ENCODE measurements at regions of chr1 and their contacts with region 1.

Region 1: GRCh38 chr1:20100632-20101355 is 18.5 kb downstream of the PLA2G2D start:
- DNase-seq: peak; percentile 45 to 58
- H3K4me3 ChIP-seq: no peak overlapping the region
- H3K27ac ChIP-seq: no peak overlapping the region
- H3K4me1 ChIP-seq: peaks cover 31% of the 10 kb centered on the region
- H3K27me3 ChIP-seq: no peaks in the 10 kb centered on the region
- CTCF ChIP-seq: peak; percentile 82

Region 2: DNA sequence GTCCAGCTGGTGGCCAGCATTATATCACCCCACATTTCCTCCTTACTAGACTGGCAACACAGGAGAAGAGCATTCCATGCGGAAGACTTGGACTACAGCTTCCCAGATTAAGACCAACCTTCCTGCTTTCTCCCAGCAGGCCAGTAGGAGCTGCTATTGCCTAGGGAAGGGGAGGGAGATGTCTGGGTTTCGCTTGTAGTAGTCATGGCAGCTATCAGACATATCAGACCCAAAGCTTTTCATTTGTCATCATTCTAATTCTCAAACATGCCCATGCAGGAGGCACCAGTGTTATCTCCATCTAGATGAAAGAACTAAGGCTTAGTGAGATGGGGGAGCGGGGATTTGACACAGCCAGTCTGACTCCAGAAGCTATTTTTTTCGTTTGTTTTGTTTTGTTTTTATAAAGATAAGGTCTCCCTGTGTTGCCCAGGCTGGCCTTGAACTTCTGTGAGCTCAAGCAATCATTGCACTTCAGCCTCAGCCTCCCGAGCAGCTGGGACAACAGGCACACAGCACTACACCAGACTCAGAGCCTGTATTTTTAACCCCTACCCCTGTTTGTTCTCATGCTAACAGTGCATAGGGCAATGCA is 125.9 kb before region 1 on chr1:
- CTCF ChIA-PET with region 1: no interaction called
- POLR2A ChIA-PET with region 1: no interaction called
- intact Hi-C with region 1: loop called (anchors 1 kb)
- DNase-seq: peak; percentile 58 to 62
- H3K4me3 ChIP-seq: no peak overlapping the region
- H3K27ac ChIP-seq: no peak overlapping the region
- H3K4me1 ChIP-seq: no peaks in the 10 kb centered on the region
- H3K27me3 ChIP-seq: no peaks in the 10 kb centered on the region
- CTCF ChIP-seq: peak; percentile 66

Region 3: GRCh38 chr1:20137043-20137442 is 36.2 kb after region 1 on chr1:
- CTCF ChIA-PET with region 1: no interaction called
- POLR2A ChIA-PET with region 1: no interaction called
- intact Hi-C with region 1: loop called (anchors 5 kb)
- DNase-seq: peak; percentile 65 to 89
- H3K4me3 ChIP-seq: no peak overlapping the region
- H3K27ac ChIP-seq: peak overlapping the region; percentile 61
- H3K4me1 ChIP-seq: peaks cover 50% of the 10 kb centered on the region
- H3K27me3 ChIP-seq: no peaks in the 10 kb centered on the region
- CTCF ChIP-seq: no peak

Region 4: GRCh38 chr1:20194757-20195461 is 94.1 kb after region 1 on chr1:
- CTCF ChIA-PET with region 1: interaction called, 3 read pairs
- POLR2A ChIA-PET with region 1: no interaction called
- intact Hi-C with region 1: loop called (anchors 5 kb)
- DNase-seq: peak in 1 of 2 experiments; percentile 49
- H3K4me3 ChIP-seq: no peak overlapping the region
- H3K27ac ChIP-seq: no peak overlapping the region
- H3K4me1 ChIP-seq: peaks cover 19% of the 10 kb centered on the region
- H3K27me3 ChIP-seq: no peaks in the 10 kb centered on the region
- CTCF ChIP-seq: peak; percentile 70

Region 5: GRCh38 chr1:20361806-20362640 is 261.2 kb after region 1 on chr1:
- CTCF ChIA-PET with region 1: no interaction called
- POLR2A ChIA-PET with region 1: no interaction called
- intact Hi-C with region 1: loop called (anchors 10 kb)
- DNase-seq: peak in 1 of 2 experiments; percentile 80
- H3K4me3 ChIP-seq: no peak overlapping the region
- H3K27ac ChIP-seq: no peak overlapping the region
- H3K4me1 ChIP-seq: peaks cover 41% of the 10 kb centered on the region
- H3K27me3 ChIP-seq: no peaks in the 10 kb centered on the region
- CTCF ChIP-seq: peak; percentile 90

Region 6: DNA sequence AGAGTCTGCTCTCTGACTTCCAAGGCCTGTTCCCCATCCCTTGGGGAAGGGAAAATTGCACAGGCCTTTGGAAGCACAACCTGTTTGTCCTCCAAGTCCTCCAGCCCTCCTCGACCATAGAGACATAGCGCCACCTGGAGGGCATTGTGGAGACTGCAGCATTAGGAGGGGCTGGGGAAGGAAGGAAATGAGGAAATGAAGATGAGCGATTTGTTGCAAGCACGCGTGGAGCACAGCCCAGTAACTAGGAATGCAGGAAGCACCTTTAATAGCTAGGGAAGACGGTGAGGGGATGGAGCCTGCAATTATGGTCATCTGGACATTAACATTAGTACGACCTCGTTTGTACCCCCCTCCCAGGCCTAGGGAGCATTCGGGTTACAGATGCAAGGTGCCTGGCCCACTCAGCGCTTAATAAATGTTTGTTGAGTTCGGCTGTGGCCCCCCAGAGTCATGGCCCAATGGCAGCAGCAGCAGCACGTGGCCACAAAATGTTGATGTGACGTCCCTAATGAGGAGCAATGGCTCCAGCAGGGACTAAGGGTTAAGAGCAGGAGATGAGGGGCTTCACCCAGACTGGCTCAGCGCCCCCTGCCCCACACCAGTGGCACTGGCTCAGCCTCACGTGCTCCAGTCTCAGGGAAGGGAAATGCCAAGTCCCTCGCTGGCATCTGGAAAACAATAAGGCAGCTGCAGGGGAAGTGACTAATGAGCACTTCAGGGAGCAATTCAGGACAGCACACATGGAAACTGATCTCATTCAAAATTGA is 393.2 kb after region 1 on chr1:
- CTCF ChIA-PET with region 1: no interaction called
- POLR2A ChIA-PET with region 1: no interaction called
- intact Hi-C with region 1: loop called (anchors 1 kb)
- DNase-seq: peak; percentile 80 to 91
- H3K4me3 ChIP-seq: no peak overlapping the region
- H3K27ac ChIP-seq: peak overlapping the region; percentile 97
- H3K4me1 ChIP-seq: peaks cover 39% of the 10 kb centered on the region
- H3K27me3 ChIP-seq: no peaks in the 10 kb centered on the region
- CTCF ChIP-seq: peak; percentile 93